ENCODE measurements at regions of chr19 and their contacts with region 1.

Region 1: DNA sequence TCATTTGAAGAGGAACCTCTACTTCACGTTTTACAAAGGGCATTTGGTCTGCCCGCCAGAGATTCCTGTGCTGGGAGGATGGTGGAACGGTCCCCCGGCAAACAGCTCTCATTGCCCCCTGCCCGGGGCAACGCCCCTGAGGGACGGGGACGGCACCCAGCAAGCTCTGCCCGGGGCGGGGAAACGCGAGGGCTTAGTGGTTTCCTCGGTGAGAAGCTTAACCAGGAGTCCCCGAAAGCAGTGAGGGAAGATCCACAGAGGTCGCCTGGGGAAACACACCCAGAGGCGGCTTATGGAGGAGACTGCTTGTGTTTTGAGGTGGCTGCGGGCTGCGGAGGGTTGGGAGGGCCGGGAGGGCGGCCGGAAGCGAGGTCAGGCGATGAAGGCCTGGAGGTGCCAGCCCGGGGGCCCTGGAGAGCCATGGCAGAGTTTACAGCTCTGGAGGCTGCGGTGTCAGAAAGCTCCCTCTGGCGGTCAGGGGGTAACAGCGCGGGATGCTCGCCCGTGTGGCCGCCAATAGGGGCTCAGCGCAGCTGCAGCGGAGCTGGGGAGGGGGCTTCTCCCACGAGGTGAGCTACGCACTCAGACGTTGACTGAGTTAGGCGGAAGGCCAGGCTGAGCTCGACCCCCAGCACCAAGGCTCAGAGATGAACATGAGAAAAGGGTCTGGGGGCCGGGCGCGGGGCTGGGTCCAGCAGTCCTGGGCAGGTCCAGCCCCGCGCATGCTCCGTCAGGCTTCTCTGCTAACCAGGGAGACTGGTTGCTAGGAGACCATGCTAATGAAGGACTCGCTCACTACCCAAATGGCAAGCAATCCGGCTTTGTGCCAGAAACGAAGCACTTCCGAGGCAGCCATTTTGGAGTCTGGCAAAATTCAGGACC is 652 bp upstream of the TPGS1 start:
- DNase-seq: peak; percentile 91 to 99 (median 98)
- H3K4me3 ChIP-seq: peak overlapping the region; percentile 74 to 100 (median 99)
- H3K27ac ChIP-seq: peak overlapping the region; percentile 93 to 100 (median 99)
- H3K27me3 ChIP-seq: no peaks in the 10 kb centered on the region
- CTCF ChIP-seq: peak; percentile 88 to 100 (median 99)

Region 2: DNA sequence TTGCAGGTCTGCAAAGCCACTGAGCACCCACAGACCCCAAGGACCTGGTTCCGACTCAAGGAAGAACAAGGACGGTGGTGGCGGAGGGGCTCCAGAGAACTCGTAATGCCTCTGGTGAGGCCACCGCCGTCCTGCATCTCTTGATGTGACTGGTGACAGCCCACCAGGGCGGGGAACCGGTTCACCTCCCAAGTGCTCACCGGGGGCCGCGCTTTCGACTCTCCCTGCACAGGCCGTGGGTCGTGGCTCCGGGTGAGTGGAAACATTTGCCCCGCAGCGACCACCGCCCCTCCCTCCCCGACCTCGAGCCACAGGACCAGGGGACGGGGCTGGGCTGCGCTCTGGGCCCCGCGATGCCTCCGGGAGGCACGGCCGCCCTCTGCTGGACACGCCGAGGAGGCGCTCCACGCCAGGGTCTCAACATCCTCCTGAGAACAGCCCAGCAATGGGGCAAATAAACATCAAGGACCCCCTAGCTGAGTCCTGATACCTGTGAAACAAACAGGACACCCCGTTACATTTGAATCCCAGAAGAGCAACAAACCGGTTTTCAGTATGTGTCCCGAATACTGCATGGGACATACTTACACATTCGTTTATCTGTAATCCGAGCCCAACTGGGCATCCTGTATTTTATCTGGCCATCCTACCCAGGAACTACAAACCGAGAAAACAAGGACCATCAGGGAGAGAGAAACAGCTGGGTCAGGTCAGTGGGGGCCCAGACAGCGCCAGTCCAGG is 211.5 kb before region 1 on chr19:
- intact Hi-C with region 1: loop called in 1 of 2 experiments (anchors 5 kb)
- DNase-seq: peak in 4 of 10 donors; percentile 32 to 66 (median 37)
- H3K4me3 ChIP-seq: peak overlapping the region; percentile 3 to 63 (median 38)
- H3K27ac ChIP-seq: peak overlapping the region in 18 of 59 donors; percentile 0 to 68 (median 39)
- H3K27me3 ChIP-seq: peaks cover 0 to 43% (median 22%) of the 10 kb centered on the region in 45 donors
- CTCF ChIP-seq: peak in 55 of 56 donors; percentile 37 to 84 (median 70)

Region 3: DNA sequence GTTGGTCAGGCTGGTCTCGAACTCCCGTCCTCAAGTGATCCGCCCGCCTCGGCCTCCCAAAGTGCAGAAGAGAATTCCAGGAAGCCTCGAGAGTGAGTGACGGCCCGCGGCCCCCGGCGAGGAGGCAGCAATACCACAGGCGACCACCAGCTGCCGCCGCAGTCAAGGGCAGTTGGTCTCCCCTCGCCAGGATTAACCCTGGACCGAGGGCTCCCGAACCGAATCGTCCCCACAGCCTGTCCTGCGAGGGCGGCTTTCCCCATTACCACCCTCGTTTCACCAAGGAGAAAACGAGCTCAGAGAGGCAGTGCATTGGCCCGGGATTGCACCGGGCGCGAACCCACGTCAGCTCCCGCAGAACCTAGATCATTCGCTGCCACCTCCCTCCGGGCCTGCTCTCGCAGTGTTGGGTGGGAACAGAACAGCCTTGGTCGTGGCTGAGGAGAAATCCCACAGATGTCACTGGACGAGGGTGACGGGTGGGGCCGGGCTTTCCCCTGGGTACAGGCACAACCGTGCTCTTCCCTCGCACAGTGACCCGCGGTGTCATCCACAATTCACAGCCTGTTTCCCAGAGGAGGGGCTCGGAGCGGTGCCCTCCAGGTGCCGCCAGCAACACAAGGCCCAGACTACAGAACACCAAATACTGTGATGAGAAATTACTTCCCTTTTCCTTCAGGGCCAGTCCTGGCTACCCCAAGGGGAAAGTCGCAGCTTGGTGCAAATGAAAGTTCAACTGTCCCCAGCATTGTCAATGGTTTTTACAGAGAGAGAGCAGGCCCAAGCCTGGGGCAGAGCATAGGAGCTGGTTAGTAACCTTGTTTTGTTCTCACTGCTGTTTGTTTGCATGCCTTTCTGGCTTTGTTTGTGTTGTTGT is 122.5 kb before region 1 on chr19:
- intact Hi-C with region 1: loop called (anchors 5 kb)
- DNase-seq: peak in 6 of 10 donors; percentile 25 to 63 (median 36)
- H3K4me3 ChIP-seq: no peak overlapping the region
- H3K27ac ChIP-seq: peak overlapping the region in 7 of 59 donors; percentile 0 to 51 (median 21)
- H3K27me3 ChIP-seq: peaks cover 0 to 4% (median 0%) of the 10 kb centered on the region in 45 donors
- CTCF ChIP-seq: peak in 55 of 56 donors; percentile 29 to 78 (median 62)

Region 4: GRCh38 chr19:459724-460511 is 46.7 kb before region 1 on chr19:
- intact Hi-C with region 1: loop called in 1 of 2 experiments (anchors 1 kb)
- DNase-seq: peak; percentile 52 to 86 (median 66)
- H3K4me3 ChIP-seq: peak overlapping the region; percentile 49 to 95 (median 79)
- H3K27ac ChIP-seq: peak overlapping the region in 58 of 59 donors; percentile 37 to 96 (median 89)
- H3K27me3 ChIP-seq: no peaks in the 10 kb centered on the region
- CTCF ChIP-seq: peak in 13 of 56 donors; percentile 6 to 40 (median 15)

Region 5: GRCh38 chr19:488505-489417 is 17.9 kb before region 1 on chr19:
- intact Hi-C with region 1: loop called (anchors 1 kb)
- DNase-seq: peak; percentile 90 to 97 (median 94)
- H3K4me3 ChIP-seq: peak overlapping the region; percentile 45 to 97 (median 88)
- H3K27ac ChIP-seq: peak overlapping the region; percentile 79 to 100 (median 98)
- H3K27me3 ChIP-seq: peaks cover 0 to 4% (median 0%) of the 10 kb centered on the region in 45 donors
- CTCF ChIP-seq: peak in 42 of 56 donors; percentile 6 to 61 (median 36)

Region 6: GRCh38 chr19:796692-797527 is 290.3 kb after region 1 on chr19 and contains the start of gene PTBP1:
- intact Hi-C with region 1: loop called in 1 of 2 experiments (anchors 2 kb)
- DNase-seq: peak; percentile 99 to 100 (median 100)
- H3K4me3 ChIP-seq: peak within 1 kb of the TSS; percentile 59 to 99 (median 87)
- H3K27ac ChIP-seq: peak within 1 kb of the TSS; percentile 70 to 100 (median 95)
- H3K27me3 ChIP-seq: no peaks in the 10 kb centered on the region
- CTCF ChIP-seq: peak in 41 of 56 donors; percentile 6 to 66 (median 35)
- total RNA-seq, gene PTBP1: 40.5 to 125 (median 72.0) TPM